Activated T-helper 1 cell treated with anti-CD3 and anti-CD28 coated beads, Interleukin-12 subunit alpha, Interleukin-12 subunit beta, Interleukin-2, Interleukin-4 antibody, amounts not matched to agents 30 ng/mL and 10 ng/mL and 1 ng/mL, durations not matched to agents 14 hours and 24 hours and 36 hours (primary cell): ENCODE measurements at regions of chr9 and their contacts with region 1.

Region 1: GRCh38 chr9:34048923-34049697 is 423 bp upstream of the UBAP2 start:
- DNase-seq: peak; percentile 94
- H3K4me3 Mint-ChIP-seq: peak overlapping the region; percentile 98
- H3K27ac Mint-ChIP-seq: peak overlapping the region; percentile 100
- H3K4me1 Mint-ChIP-seq: peaks cover 44% of the 10 kb centered on the region
- H3K27me3 Mint-ChIP-seq: no peaks in the 10 kb centered on the region

Region 2: DNA sequence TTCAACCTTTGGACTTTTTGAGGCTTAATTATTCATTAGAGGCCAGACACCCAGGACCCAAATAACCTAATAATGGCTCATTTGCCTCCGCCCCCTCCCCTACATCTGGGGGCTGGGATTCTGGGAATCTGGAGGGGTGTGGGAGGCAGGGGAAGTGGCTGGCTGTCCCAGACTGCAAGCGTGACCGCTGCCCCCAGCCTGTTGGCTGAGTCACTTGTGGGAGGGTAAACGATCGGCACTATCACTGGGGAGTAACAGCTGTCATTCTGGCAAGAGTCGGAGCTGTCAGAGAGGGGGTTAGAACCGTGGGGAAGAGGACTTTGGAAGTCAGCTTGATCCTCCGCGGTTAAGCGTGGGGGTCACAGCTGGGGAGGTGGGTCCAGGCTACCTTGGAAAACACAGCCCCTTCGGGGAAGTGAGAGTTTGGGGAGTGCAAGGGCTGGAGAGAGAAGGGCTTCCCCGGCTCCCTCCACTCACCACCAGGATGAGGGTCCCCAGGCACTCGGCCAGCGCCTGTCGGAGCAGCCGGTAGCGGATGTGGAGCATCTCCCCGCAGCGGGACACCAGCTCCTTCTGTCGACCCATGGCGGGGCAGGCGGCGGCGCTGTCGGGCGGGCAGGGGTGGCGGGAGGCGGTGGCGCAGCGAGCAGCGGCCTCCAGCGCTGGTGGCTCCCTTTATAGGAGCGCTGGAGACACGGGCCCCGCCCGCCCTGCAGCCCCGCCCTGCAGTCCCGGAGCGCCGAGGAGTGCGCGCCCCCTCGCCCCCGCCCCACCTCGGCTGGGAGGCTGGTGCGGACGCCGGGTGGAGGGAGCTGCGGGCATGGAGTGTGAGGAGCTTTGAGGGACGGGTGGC is 601.9 kb before region 1 on chr9 and contains the start of gene AQP3:
- intact Hi-C with region 1: loop called (anchors 2 kb)
- DNase-seq: peak; percentile 72
- H3K4me3 Mint-ChIP-seq: peak within 1 kb of the TSS; percentile 93
- H3K27ac Mint-ChIP-seq: peak within 1 kb of the TSS; percentile 90
- H3K4me1 Mint-ChIP-seq: peaks cover 40% of the 10 kb centered on the region
- H3K27me3 Mint-ChIP-seq: no peaks in the 10 kb centered on the region
- total RNA-seq, gene AQP3: 3.4 and 6.1 TPM in 2 replicates

Region 3: DNA sequence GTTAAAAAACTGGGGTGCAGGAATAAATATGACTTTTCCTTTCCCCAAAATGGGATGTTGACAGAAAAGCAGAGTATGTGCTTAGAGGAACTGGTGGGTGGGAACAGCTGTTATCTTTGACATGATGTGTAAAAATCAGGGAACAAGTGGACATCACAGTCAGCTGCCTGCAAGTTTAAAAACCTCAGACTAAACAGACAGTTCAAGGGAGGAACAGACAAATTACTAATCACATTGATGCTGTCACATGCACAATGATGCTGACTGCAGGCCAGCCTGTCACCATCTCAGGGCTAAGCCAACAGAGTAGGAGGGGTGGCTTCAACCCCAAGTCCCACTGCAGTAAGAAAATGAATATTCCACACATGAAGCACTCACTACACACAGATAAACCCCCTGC is 37.8 kb after region 1 on chr9:
- intact Hi-C with region 1: loop called (anchors 1 kb)
- DNase-seq: no peak
- H3K4me3 Mint-ChIP-seq: no peak overlapping the region
- H3K27ac Mint-ChIP-seq: no peak overlapping the region
- H3K4me1 Mint-ChIP-seq: peaks cover 11% of the 10 kb centered on the region
- H3K27me3 Mint-ChIP-seq: no peaks in the 10 kb centered on the region

Region 4: DNA sequence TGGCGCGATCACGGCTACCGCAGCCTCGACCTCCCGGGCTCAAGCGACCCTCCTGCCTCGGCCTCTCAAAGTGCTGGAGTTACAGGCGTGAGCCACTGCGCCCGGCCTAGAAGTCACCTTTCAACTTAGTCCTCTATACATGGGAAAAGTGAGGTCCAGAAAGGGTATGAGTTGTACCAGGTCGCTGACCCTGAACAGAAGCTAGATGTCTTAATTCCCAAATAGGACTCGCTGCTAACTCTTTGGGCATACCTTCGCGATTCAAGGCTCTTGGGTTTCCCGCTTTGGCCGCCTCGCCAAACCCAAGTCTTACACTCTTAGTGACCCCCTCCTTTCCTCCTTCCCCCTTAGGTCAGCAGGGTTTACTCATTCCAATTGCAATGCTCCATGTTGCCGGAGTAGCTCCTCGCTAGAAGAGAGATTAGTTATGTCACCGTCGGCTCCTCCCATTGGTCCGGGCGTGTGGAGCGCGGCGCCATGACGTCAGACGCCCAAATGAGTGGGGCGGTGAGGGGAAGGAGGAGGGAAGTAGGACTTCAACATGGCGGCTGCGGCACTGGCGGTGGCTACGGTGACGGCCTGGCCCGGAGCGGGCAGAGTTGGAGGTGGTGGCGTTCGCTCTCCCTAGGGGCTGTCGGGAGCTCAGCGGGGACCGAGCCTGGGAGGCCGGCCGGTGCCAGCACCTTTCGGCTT is 129.6 kb after region 1 on chr9 and contains the start of gene UBAP1:
- intact Hi-C with region 1: loop called (anchors 1 kb)
- DNase-seq: peak; percentile 95
- H3K4me3 Mint-ChIP-seq: peak within 1 kb of the TSS; percentile 92
- H3K27ac Mint-ChIP-seq: peak within 1 kb of the TSS; percentile 94
- H3K4me1 Mint-ChIP-seq: peaks cover 5% of the 10 kb centered on the region
- H3K27me3 Mint-ChIP-seq: no peaks in the 10 kb centered on the region
- total RNA-seq, gene UBAP1: 30.0 and 33.4 TPM in 2 replicates

Region 5: DNA sequence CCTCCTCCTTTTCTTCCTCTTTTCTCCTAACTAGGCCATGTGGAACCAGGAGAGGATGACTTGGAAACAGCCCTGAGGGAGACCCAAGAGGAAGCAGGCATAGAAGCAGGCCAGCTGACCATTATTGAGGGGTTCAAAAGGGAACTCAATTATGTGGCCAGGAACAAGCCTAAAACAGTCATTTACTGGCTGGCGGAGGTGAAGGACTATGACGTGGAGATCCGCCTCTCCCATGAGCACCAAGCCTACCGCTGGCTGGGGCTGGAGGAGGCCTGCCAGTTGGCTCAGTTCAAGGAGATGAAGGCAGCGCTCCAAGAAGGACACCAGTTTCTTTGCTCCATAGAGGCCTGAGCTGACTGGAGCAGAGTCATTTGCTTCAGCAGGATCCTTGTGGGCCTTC is 294.0 kb after region 1 on chr9:
- intact Hi-C with region 1: no loop called
- DNase-seq: no peak
- H3K4me3 Mint-ChIP-seq: no peak overlapping the region
- H3K27ac Mint-ChIP-seq: no peak overlapping the region
- H3K4me1 Mint-ChIP-seq: no peaks in the 10 kb centered on the region
- H3K27me3 Mint-ChIP-seq: no peaks in the 10 kb centered on the region

Region 6: GRCh38 chr9:34611829-34612630 is 562.9 kb after region 1 on chr9 and contains the start of gene RPP25L:
- intact Hi-C with region 1: loop called (anchors 2 kb)
- DNase-seq: peak; percentile 84
- H3K4me3 Mint-ChIP-seq: peak within 1 kb of the TSS; percentile 95
- H3K27ac Mint-ChIP-seq: peak within 1 kb of the TSS; percentile 96
- H3K4me1 Mint-ChIP-seq: peaks cover 24% of the 10 kb centered on the region
- H3K27me3 Mint-ChIP-seq: no peaks in the 10 kb centered on the region
- total RNA-seq, gene RPP25L: 37.5 and 40.2 TPM in 2 replicates

Region 7: GRCh38 chr9:35489313-35490154 is 1440.4 kb after region 1 on chr9 and contains the start of gene RUSC2:
- intact Hi-C with region 1: no loop called
- DNase-seq: peak; percentile 51
- H3K4me3 Mint-ChIP-seq: peak within 1 kb of the TSS; percentile 88
- H3K27ac Mint-ChIP-seq: peak within 1 kb of the TSS; percentile 63
- H3K4me1 Mint-ChIP-seq: peaks cover 35% of the 10 kb centered on the region
- H3K27me3 Mint-ChIP-seq: peaks cover 14% of the 10 kb centered on the region
- total RNA-seq, gene RUSC2: 4.4 and 5.8 TPM in 2 replicates